PC-3 (cell line): ENCODE measurements at regions of chrX and their contacts with region 1.

Region 1: DNA sequence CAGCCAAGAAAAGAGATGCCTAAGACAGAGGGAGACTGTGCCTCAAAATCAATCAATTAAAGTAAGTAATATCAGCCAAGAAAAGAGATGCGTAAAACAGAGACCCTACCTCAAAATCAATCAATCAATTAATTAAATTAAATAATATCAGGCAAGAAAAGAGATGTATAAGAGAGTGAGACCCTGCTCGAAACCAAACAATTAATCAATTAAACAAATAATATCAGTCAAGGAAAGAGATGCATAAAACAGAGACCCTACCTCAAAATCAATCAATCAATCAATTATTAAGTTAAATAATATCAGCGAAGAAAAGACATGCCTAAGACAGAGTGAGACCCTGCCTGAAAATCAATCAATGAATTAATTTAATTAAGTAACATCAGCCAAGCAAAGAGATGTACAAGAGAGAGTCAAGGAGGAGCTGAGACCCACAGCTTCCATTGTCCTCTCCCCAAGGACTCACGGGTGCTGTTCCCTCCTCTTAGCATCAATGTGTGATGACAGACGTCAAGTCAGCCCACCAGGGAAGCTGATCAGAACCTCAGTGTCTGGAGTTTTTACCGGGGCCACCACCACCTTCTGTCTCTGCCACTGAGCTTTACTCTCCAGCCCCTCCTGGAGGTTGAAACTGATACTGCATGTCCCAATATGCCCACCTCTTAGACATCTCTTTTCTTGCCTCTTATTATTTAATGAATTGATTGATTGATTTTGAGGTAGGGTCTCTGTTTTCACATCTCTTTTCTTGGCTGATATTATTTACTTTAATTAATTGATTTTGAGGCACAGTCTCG is 10.5 kb upstream of the AKAP17A start:
- DNase-seq: peak; percentile 71
- ATAC-seq: peak; percentile 58
- H3K4me3 ChIP-seq: no peak overlapping the region
- H3K27ac ChIP-seq: no peak overlapping the region
- H3K4me1 ChIP-seq: peaks cover 5% of the 10 kb centered on the region; the same call in 1 of the 2 replicates
- H3K27me3 ChIP-seq: no peaks in the 10 kb centered on the region
- CTCF ChIP-seq: peak; percentile 61

Region 2: GRCh38 chrX:1246816-1247215 is 334.1 kb before region 1 on chrX:
- CTCF ChIA-PET with region 1: no interaction called
- POLR2A ChIA-PET with region 1: no interaction called
- intact Hi-C with region 1: loop called (anchors 5 kb)
- DNase-seq: peak; percentile 82
- ATAC-seq: peak; percentile 37; the same call in 1 of the 2 replicates
- H3K4me3 ChIP-seq: no peak overlapping the region
- H3K27ac ChIP-seq: no peak overlapping the region
- H3K4me1 ChIP-seq: peaks cover 7% of the 10 kb centered on the region; the same call in 1 of the 2 replicates
- H3K27me3 ChIP-seq: no peaks in the 10 kb centered on the region; the same call in 1 of the 2 replicates
- CTCF ChIP-seq: peak; percentile 70